ENCODE measurements at regions of chr1 and their contacts with region 1.

Region 1: GRCh38 chr1:26233903-26234643 is at the start of gene CEP85:
- DNase-seq: peak; percentile 98 to 99 (median 99)
- ATAC-seq: peak; percentile 97
- H3K4me3 ChIP-seq: peak within 1 kb of the TSS; percentile 40
- H3K4me1 ChIP-seq: peaks cover 6% of the 10 kb centered on the region
- CTCF ChIP-seq: peak; percentile 90
- total RNA-seq, gene CEP85: 10.7 to 15.9 (median 15.6) TPM

Region 2: GRCh38 chr1:26169669-26170471 is 64.2 kb before region 1 on chr1 and contains the start of gene ZNF593:
- intact Hi-C with region 1: loop called in 1 of 2 experiments (anchors 2 kb)
- DNase-seq: peak; percentile 95
- ATAC-seq: peak; percentile 98
- H3K4me3 ChIP-seq: peak within 1 kb of the TSS; percentile 40
- H3K4me1 ChIP-seq: peaks cover 6% of the 10 kb centered on the region
- CTCF ChIP-seq: peak; percentile 90
- total RNA-seq, gene ZNF593: 14.8 to 21.4 (median 17.9) TPM

Region 3: DNA sequence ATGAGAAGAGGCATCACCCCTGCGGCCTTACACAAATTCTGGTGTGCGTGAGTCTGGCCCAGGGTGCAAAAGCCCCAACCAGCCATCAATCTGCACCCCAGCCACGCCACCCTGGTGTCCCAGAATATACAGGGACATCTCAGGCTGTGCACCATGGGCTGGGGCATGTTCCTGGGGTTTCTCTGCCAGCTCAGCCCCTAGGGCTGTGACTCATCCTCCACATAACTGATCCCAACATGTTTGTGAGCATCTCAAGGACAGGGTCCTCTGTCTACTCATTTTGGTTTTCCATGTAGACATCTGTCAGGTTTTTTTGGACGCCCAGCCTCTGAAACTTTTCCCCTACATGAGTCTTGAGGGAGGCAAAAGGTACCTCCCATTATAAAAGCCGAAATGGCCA is 138.0 kb after region 1 on chr1:
- intact Hi-C with region 1: no loop called
- DNase-seq: no peak
- ATAC-seq: no peak
- H3K4me3 ChIP-seq: no peak overlapping the region
- H3K4me1 ChIP-seq: no peaks in the 10 kb centered on the region
- CTCF ChIP-seq: no peak